Caco-2 (cell line): ENCODE measurements at regions of chr5 and their contacts with region 1.

Region 1: DNA sequence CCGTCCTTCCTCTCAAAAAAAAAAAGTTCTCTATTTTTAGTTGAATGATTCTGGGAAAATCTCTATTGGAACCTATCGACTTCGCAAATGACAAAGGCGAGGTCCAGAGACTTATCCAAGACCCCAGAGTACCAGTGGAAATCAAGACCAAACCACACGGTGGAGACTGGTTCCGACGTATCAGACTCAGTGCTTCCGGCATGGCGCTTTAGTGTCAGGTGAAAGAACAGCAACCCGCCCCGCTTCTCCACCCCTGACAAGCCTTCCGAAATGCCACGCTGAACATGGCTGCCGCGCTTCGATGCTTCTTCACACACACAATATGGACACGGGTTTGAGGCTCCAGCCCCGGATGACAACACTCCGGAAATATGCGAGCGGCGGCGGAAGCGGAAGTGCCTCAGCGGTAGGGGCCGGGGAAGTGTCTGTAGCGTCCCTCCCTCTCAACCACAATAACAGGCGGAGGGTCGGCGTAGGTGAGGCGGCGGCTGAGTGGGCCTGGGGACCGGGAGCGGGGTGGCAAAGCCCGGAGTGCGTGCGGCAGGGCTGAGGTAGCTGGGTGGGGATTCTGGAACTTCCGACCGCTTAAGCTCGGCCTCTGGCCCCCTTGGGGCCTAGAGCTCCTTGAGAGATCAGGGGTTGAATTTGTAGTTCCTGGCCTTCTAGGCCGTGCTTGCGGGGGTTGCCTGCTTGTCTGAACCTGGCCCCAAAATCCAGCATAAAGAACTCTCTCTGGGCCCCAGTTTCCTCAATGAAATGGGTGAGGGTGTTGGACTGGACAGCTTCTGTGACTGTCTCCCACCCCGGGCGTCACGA is at the start of gene FBXO38:
- DNase-seq: peak; percentile 96 to 97
- H3K4me3 ChIP-seq: peak within 1 kb of the TSS; percentile 74
- H3K4me3 Mint-ChIP-seq: peak within 1 kb of the TSS; percentile 92
- H3K27ac Mint-ChIP-seq: peak within 1 kb of the TSS; percentile 98
- H3K4me1 ChIP-seq: peaks cover 16% of the 10 kb centered on the region
- H3K4me1 Mint-ChIP-seq: peaks cover 15% of the 10 kb centered on the region
- H3K27me3 ChIP-seq: no peaks in the 10 kb centered on the region
- H3K27me3 Mint-ChIP-seq: no peaks in the 10 kb centered on the region
- CTCF ChIP-seq: peak in 1 of 2 experiments; percentile 1
- total RNA-seq, gene FBXO38: 36.7 and 45.5 TPM in 2 replicates

Region 2: DNA sequence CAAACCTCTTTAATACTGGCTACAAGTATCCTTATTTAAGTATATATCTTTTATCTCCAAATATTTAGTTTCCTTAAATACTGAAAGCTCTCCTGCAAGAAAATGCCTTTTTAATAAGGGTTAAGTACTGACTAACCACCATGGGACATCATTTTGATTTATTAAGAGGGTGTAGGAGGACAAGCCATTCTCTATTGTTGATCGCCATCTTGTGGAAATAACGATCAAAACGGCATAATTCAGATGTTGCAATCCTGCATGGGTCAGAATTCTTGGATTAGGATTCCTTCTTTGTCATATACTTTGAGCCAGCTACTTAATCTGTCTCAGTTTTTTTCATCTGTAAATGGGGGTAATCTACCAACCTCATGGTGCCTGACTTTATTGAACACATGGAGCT is 448.7 kb before region 1 on chr5:
- CTCF ChIA-PET with region 1: no interaction called
- POLR2A ChIA-PET with region 1: no interaction called
- intact Hi-C with region 1: no loop called
- DNase-seq: peak in 1 of 2 experiments; percentile 53
- H3K4me3 ChIP-seq: no peak overlapping the region
- H3K4me3 Mint-ChIP-seq: no peak overlapping the region
- H3K27ac Mint-ChIP-seq: no peak overlapping the region
- H3K4me1 ChIP-seq: no peaks in the 10 kb centered on the region
- H3K4me1 Mint-ChIP-seq: no peaks in the 10 kb centered on the region
- H3K27me3 ChIP-seq: no peaks in the 10 kb centered on the region
- H3K27me3 Mint-ChIP-seq: no peaks in the 10 kb centered on the region
- CTCF ChIP-seq: peak; percentile 50 to 57

Region 3: GRCh38 chr5:148248894-148249293 is 134.9 kb before region 1 on chr5:
- CTCF ChIA-PET with region 1: no interaction called
- POLR2A ChIA-PET with region 1: no interaction called
- intact Hi-C with region 1: no loop called
- DNase-seq: no peak
- H3K4me3 ChIP-seq: no peak overlapping the region
- H3K4me3 Mint-ChIP-seq: no peak overlapping the region
- H3K27ac Mint-ChIP-seq: no peak overlapping the region
- H3K4me1 ChIP-seq: no peaks in the 10 kb centered on the region
- H3K4me1 Mint-ChIP-seq: no peaks in the 10 kb centered on the region
- H3K27me3 ChIP-seq: no peaks in the 10 kb centered on the region
- H3K27me3 Mint-ChIP-seq: peaks cover 8% of the 10 kb centered on the region
- CTCF ChIP-seq: no peak

Region 4: DNA sequence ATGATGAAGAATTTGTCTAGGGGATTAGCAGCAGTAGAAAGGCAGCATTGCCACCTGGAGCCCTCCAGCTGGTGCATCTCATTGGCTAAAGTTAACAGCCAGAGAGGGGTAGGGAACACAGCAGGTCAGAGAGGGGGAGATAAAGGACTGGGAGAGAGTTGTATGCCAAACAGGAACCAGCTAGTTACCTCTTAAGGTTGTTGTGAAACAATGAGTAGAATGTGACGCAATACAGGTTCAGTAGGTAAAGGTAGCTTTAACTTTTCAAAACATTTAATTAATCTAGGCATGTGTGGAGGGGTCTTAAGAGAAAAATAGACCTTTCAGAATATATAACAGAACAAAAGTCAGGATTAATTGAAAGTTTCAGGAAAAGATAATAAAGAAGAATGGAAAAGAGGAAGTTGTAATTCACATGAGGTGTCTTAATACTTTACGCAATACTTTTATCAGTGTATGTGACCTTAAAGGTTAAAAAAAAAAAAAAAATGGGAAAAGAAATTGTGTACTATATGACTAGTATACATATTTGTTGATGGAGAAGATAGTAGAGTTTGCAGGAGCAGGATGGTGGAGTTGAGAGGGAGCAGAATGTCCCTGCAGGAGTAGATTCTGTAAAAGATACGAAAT is 14.3 kb after region 1 on chr5:
- CTCF ChIA-PET with region 1: interaction called, 5 read pairs
- POLR2A ChIA-PET with region 1: interaction called, 5 read pairs
- intact Hi-C with region 1: loop called (anchors 1 kb)
- DNase-seq: peak; percentile 64 to 75
- H3K4me3 ChIP-seq: no peak overlapping the region
- H3K4me3 Mint-ChIP-seq: peak overlapping the region; percentile 27
- H3K27ac Mint-ChIP-seq: peak overlapping the region; percentile 67
- H3K4me1 ChIP-seq: peaks cover 46% of the 10 kb centered on the region
- H3K4me1 Mint-ChIP-seq: peaks cover 35% of the 10 kb centered on the region
- H3K27me3 ChIP-seq: no peaks in the 10 kb centered on the region
- H3K27me3 Mint-ChIP-seq: no peaks in the 10 kb centered on the region
- CTCF ChIP-seq: no peak

Region 5: GRCh38 chr5:148897842-148898241 is 514.1 kb after region 1 on chr5:
- CTCF ChIA-PET with region 1: no interaction called
- POLR2A ChIA-PET with region 1: no interaction called
- intact Hi-C with region 1: no loop called
- DNase-seq: no peak
- H3K4me3 ChIP-seq: no peak overlapping the region
- H3K4me3 Mint-ChIP-seq: no peak overlapping the region
- H3K27ac Mint-ChIP-seq: no peak overlapping the region
- H3K4me1 ChIP-seq: no peaks in the 10 kb centered on the region
- H3K4me1 Mint-ChIP-seq: no peaks in the 10 kb centered on the region
- H3K27me3 ChIP-seq: no peaks in the 10 kb centered on the region
- H3K27me3 Mint-ChIP-seq: no peaks in the 10 kb centered on the region
- CTCF ChIP-seq: no peak